ENCODE measurements at regions of chrX and their contacts with region 1.

Region 1: DNA sequence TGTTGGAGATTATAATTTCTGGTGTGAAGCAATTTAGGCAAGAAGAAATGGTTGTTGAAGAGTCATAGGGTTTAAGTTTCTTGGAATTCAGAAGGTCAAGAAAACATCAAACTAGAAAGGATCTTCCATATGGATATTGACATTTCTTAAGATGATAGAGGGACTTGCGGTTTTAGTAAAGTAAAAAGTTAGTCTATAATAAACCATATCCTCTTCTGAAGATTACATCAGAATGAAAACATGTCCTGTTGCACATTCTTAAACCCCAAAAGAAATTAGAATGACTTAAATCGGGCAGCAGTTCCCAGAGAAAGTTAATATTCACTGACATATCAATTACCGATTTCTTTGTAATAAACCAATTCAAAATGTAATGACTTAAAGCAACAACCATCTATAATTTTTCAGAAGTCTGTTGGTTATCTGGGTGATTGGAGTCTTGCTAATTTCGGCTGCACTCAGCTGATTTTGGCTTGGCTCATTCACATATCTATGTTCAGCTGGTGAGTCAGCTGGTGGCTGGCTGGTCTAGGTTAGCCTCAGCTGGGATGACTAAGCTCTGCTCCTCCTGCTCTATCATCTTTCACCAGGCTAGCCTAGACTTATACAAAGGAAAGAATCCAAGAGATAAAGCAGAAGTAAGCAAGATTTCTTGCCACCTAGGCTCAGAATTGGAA is 24.4 kb upstream of the DYNLT3 start:
- DNase-seq: peak; percentile 40 to 63
- ATAC-seq: peak; percentile 100
- H3K4me3 ChIP-seq: no peak overlapping the region
- H3K27ac ChIP-seq: peak overlapping the region in 3 of 4 donors; percentile 50 to 62 (median 59)
- H3K4me1 ChIP-seq: peaks cover 0 to 4% of the 10 kb centered on the region in 2 donors
- H3K27me3 ChIP-seq: peaks cover 0 to 4% (median 0%) of the 10 kb centered on the region in 3 donors
- CTCF ChIP-seq: no peak
- POLR2A ChIP-seq: no peak

Region 2: GRCh38 chrX:37846934-37847732 is 24.6 kb before region 1 on chrX and contains the start of gene DYNLT3:
- in situ Hi-C with region 1: no loop called
- intact Hi-C with region 1: loop called (anchors 2 kb)
- DNase-seq: peak; percentile 58 to 76
- ATAC-seq: peak; percentile 94 to 95
- H3K4me3 ChIP-seq: peak within 1 kb of the TSS; percentile 67 to 88 (median 83)
- H3K27ac ChIP-seq: peak within 1 kb of the TSS; percentile 86 to 90 (median 88)
- H3K4me1 ChIP-seq: peaks cover 0 to 4% of the 10 kb centered on the region in 2 donors
- H3K27me3 ChIP-seq: no peaks in the 10 kb centered on the region
- CTCF ChIP-seq: no peak
- POLR2A ChIP-seq: peak; percentile 88 to 89
- total RNA-seq, gene DYNLT3: 12.7 to 22.2 (median 15.0) TPM

Region 3: DNA sequence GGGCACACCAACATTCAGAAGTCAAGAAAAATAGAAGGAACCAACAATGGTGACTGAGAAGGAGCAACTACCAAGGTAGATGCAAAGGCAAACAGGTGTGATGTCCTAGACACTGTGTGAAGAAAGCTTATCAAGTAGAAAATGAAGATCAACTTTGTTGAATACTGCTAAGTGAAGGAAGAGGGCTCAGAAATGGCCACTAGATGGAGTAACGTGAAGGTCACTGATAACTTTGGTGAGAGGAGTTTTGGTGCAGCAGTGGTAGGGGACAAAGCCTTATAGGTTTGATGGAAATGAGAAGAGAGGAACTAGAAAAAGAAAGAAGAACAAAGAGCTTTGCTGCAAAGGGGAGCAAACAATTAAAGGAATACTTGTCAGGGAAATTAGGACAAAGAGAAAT is 504.1 kb after region 1 on chrX:
- in situ Hi-C with region 1: no loop called
- intact Hi-C with region 1: no loop called
- DNase-seq: no peak
- ATAC-seq: no peak
- H3K4me3 ChIP-seq: no peak overlapping the region
- H3K27ac ChIP-seq: no peak overlapping the region
- H3K4me1 ChIP-seq: no peaks in the 10 kb centered on the region
- H3K27me3 ChIP-seq: peaks cover 0 to 5% (median 0%) of the 10 kb centered on the region in 3 donors
- CTCF ChIP-seq: peak in 2 of 5 experiments; percentile 7 to 25
- POLR2A ChIP-seq: no peak

Measured in gastrocnemius medialis (tissue), 4 donors.